ENCODE measurements at regions of chr14 and their contacts with region 1.

Region 1: DNA sequence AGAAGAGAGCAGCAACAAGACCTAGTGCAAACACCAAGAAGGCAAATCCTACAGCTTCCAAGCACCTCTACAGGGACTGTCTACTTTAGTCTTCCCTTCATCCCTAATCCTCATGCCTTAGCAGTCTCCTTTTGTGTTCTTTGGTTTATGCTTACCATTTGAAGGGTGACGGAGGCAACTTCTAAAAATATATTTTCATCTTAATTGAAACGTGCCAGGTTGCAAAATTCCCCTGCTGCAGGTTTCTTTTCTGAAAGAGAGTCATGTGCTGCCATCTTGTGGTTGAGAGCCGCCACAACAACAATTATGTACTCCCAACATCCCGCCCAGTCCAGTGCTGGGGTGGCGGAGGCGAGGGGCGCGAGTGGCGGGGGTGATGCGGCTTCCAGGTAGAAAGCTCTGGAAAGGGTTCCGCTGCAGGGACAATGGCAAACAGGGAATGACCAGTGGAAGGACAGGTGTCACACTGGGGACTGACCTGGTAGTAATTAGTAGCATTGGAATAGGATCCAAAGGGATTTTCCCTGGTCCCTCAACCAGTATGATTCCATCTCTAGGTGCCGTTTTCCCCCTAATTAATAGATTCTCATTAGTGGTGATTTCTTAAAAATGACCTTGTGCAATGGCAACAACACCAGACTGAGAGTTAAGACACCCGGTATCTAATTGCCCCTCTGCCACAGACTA is 80.3 kb upstream of the GNG2 start:
- DNase-seq: peak; percentile 40 to 84
- ATAC-seq: peak; percentile 73

Region 2: GRCh38 chr14:51448831-51449670 is 331.1 kb before region 1 on chr14:
- intact Hi-C with region 1: no loop called
- DNase-seq: no peak
- ATAC-seq: no peak

Region 3: DNA sequence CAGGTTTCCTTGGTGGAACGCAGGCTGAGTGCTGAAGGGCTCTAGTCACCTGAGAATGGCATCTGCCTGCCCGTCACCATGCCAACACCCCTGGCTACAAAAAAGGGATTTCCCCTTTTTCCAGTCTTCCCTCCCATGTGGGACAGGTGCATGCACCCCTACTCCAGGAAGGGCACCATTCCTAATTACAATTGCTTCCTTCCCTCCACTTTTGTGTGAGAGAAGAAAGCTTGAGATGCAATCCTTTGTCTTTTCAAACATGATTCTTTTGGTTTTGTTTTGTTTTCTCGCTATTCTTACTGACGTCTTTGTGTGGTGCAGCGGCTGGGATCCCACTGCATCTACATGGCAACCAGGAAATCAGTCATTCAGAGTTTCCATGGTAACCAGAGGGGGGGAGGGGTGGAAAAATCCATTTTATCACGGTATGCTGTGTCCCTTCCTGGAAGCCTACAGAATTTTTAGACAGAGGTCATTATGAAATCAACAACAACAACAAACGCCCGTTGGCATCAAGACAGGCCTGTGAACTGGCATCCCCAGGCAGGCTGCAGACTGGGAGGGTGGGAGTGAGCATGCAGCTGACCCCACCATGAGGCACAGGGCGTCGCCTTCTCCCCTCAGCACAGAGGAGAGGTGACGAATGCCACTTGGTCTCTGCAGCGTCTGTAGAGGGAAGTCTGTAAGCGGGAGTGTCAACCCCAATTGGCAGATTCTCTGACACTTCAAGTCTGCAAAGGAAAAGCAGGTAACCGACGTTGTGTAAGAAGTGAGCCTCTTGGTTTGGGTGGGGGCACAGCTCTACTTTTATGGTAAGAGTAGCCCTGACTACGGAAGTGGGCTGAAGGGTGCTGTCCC is 66.7 kb after region 1 on chr14:
- intact Hi-C with region 1: no loop called
- DNase-seq: peak; percentile 58 to 60
- ATAC-seq: peak; percentile 81

Region 4: GRCh38 chr14:51901475-51902024 is 121.4 kb after region 1 on chr14:
- intact Hi-C with region 1: no loop called
- DNase-seq: no peak
- ATAC-seq: no peak

Region 5: DNA sequence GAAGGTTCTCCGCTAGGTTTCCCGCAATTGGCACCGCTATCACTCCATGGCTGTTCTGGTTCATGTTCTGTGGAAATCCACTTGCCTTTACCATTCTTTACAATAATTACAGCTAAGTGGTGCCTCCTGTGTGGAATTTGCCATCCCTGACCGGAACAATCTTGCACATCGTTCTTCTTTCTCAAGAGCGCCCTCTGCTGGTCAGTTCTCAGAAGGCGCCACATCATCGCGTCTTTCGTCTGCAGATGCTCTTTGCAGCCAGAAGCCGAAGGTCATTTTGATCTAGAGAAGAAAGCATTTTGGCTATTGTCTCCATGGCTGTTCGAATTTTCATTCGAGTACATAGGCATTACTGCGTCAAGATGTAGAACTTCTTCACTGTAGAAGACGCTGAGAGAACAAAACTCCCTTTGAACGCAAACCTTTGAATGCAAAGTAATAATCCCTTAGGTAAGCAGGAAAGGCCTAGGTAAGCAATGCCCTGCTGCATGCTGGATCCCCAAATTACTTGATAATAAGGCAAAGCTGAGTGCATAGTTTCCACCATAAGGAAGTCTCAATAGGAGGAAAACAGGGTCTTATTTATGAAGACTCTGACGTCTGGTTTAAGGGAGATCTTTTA is 199.1 kb after region 1 on chr14:
- intact Hi-C with region 1: loop called in 1 of 2 experiments (anchors 10 kb)
- DNase-seq: peak; percentile 58 to 89
- ATAC-seq: peak; percentile 85

Measured in left colon (tissue), 2 donors.